PC-9 (cell line): ENCODE measurements at regions of chr6 and their contacts with region 1.

Region 1: DNA sequence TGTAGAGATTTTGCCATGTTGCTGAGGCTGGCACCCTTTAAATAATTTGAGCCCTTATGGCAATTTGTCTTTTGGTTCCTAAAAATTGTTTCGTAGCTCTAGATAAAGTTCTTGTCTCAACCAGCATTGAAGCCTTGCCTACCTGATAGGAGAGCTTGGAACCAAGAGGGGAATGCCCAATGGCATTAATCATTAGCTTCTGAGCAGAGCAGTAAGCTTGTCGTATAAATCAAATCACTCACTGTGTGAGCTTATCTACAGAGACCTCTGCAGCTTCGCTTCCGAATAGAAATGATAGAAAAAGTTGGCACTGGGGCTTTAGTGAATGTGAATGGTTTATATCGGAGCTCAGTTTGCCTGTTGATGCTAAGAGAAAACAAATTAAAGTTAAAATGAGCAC is 10.7 kb downstream of the ANKRD6 start:
- DNase-seq: no peak
- H3K4me3 ChIP-seq: no peak overlapping the region
- H3K27ac ChIP-seq: no peak overlapping the region
- H3K4me1 ChIP-seq: no peaks in the 10 kb centered on the region
- H3K27me3 ChIP-seq: no peaks in the 10 kb centered on the region
- CTCF ChIP-seq: no peak

Region 2: DNA sequence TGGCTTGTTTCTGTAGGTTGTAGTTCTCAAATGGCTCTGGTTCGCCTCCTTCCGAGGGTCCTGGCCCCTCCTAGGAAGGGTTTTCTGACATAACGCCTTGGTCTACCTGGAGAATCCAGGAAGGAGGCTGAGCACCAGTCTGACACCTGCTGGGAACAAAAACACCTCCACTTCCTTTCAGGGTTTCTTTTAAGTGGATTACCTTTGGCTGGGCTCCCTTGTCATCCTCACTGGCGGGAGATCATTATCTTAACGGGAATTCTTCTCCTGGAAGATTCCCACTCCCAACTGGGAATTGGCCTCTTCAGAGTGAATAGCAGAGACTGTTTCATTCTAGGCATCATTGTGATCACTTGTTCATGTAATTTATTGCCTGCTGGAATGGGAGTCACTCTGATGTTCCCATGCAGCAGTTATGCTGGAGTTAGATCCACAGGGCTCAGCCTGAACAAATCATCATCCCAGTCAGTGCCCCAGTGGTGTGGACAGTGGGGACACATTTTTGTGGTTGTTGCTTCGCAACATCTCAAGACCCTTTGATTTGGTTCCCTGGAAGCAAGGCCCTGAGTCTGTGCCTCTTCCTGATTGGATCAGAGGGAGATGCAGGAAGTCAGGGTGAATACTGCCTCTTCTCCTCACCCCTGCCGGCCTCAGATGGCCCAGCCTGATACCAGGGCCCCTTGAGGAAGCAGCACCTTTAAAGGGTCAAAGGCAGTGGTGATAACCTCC is 145.8 kb after region 1 on chr6:
- CTCF ChIA-PET with region 1: no interaction called
- POLR2A ChIA-PET with region 1: interaction called, 19 read pairs
- intact Hi-C with region 1: no loop called
- DNase-seq: no peak
- H3K4me3 ChIP-seq: no peak overlapping the region
- H3K27ac ChIP-seq: no peak overlapping the region
- H3K4me1 ChIP-seq: no peaks in the 10 kb centered on the region
- H3K27me3 ChIP-seq: no peaks in the 10 kb centered on the region
- CTCF ChIP-seq: no peak

Region 3: DNA sequence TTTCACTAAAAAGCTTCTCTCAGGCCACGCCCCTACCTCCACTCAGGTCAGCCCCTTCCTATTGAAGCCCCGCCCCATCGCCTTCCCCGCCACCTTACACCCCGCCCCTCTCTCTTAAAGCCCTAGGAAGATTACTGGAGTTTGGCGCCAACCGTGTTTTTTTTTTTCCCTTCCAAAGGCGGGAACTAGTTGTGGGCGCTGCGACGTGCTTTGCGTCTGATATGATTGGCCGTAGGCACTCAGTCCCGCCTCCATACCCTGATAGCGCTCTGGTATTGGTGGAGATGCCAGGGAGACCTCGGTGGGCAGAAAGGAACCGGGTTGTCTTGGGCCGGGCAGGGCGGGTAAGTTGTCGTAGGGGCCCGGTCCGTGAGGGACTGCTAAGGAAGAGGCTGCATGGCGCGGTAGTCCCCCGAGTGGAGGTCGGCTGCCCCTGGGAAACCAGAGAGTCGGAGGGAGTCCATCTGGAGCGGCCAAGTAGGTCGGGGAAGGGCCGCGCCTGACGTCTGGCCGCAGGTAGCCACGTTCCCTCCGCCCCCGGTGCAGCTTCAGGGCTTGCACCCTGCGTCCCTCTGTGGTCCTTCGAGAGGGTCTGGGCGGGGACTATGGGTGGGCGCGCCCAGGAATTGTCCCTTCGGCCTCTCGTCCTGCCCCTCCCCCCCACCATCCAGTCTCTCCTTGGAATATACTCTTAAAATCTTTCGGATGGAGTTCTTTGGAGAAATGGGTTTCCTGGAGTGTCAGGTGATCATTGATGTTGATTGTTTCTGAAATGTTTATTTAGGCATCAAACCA is 386.1 kb after region 1 on chr6 and contains the start of gene CASP8AP2:
- CTCF ChIA-PET with region 1: no interaction called
- POLR2A ChIA-PET with region 1: no interaction called
- intact Hi-C with region 1: no loop called
- DNase-seq: peak; percentile 93 to 95
- H3K4me3 ChIP-seq: peak within 1 kb of the TSS; percentile 74
- H3K27ac ChIP-seq: peak within 1 kb of the TSS; percentile 47
- H3K4me1 ChIP-seq: 0 out of 2 replicates have a peak, but pooled peaks cover 3% of the 10 kb centered on the region
- H3K27me3 ChIP-seq: no peaks in the 10 kb centered on the region
- CTCF ChIP-seq: no peak
- total RNA-seq, gene CASP8AP2: 14.7 and 17.4 TPM in 2 replicates